HEK293 (cell line): ENCODE measurements at regions of chr1 and their contacts with region 1.

Region 1: GRCh38 chr1:223748773-223749733 is 36.7 kb downstream of the CAPN2 start:
- H3K4me3 ChIP-seq: no peak overlapping the region
- H3K27ac ChIP-seq: no peak overlapping the region
- H3K4me1 ChIP-seq: no peaks in the 10 kb centered on the region
- CTCF ChIP-seq: peak; percentile 82

Region 2: GRCh38 chr1:223645903-223646302 is 103.2 kb before region 1 on chr1:
- CTCF ChIA-PET with region 1: no interaction called
- POLR2A ChIA-PET with region 1: no interaction called
- H3K4me3 ChIP-seq: no peak overlapping the region
- H3K27ac ChIP-seq: no peak overlapping the region
- H3K4me1 ChIP-seq: peaks cover 7% of the 10 kb centered on the region; the same call in 1 of the 2 replicates
- CTCF ChIP-seq: no peak

Region 3: GRCh38 chr1:223670458-223671168 is 78.4 kb before region 1 on chr1:
- CTCF ChIA-PET with region 1: no interaction called
- POLR2A ChIA-PET with region 1: no interaction called
- H3K4me3 ChIP-seq: no peak overlapping the region
- H3K27ac ChIP-seq: no peak overlapping the region
- H3K4me1 ChIP-seq: no peaks in the 10 kb centered on the region
- CTCF ChIP-seq: peak; percentile 44; the same call in 1 of the 2 replicates

Region 4: DNA sequence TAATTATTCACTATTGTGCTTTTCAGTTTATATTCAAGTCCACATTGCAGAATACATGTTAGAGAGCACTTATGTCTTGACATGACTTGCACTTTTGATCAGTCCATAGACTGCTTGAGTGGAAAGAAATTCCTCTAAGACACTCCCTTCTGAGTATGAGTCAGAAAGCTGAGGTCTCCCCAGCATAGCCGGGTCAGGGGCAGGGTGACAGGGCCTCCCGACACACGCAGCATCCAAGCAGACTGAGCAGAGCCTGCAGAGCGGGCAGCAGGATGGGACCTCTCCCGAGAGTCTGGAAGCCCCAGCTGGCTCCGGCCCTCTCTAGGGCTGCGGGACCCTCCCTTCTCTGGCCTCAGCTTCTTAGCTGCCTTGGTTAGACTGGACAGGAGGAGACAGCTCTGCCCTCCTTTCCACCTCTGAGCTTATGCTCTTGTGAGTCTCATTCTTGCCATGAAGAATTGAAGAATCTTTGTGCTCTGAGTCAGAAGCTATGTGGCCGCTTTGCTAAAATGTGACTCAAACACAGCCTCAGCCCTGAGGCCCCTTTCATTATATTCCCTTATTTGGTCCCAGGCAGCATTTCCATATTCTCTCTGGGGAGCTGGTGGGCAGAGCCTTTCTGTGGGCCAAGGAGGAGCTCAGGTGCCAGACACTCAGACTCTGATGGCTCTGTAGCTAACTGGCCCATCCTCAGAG is 48.0 kb before region 1 on chr1:
- CTCF ChIA-PET with region 1: interaction called, 70 read pairs
- POLR2A ChIA-PET with region 1: interaction called, 4 read pairs
- H3K4me3 ChIP-seq: no peak overlapping the region
- H3K27ac ChIP-seq: peak overlapping the region; percentile 38; the same call in 1 of the 2 replicates
- H3K4me1 ChIP-seq: peaks cover 15% of the 10 kb centered on the region
- CTCF ChIP-seq: no peak

Region 5: GRCh38 chr1:223726380-223727001 is 22.6 kb before region 1 on chr1:
- CTCF ChIA-PET with region 1: interaction called, 23 read pairs
- POLR2A ChIA-PET with region 1: interaction called, 3 read pairs
- H3K4me3 ChIP-seq: no peak overlapping the region
- H3K27ac ChIP-seq: peak overlapping the region; percentile 1
- H3K4me1 ChIP-seq: peaks cover 27% of the 10 kb centered on the region
- CTCF ChIP-seq: no peak

Region 6: GRCh38 chr1:223761411-223761810 is 12.4 kb after region 1 on chr1:
- CTCF ChIA-PET with region 1: interaction called, 17 read pairs
- POLR2A ChIA-PET with region 1: interaction called, 4 read pairs
- H3K4me3 ChIP-seq: no peak overlapping the region
- H3K27ac ChIP-seq: no peak overlapping the region
- H3K4me1 ChIP-seq: no peaks in the 10 kb centered on the region
- CTCF ChIP-seq: no peak

Region 7: GRCh38 chr1:224113918-224114786 is 365.1 kb after region 1 on chr1 and contains the start of gene FBXO28:
- CTCF ChIA-PET with region 1: no interaction called
- POLR2A ChIA-PET with region 1: no interaction called
- H3K4me3 ChIP-seq: peak within 1 kb of the TSS; percentile 99
- H3K27ac ChIP-seq: peak within 1 kb of the TSS; percentile 91
- H3K4me1 ChIP-seq: peaks cover 5% of the 10 kb centered on the region
- CTCF ChIP-seq: no peak; the same call in 1 of the 2 replicates